ENCODE measurements at regions of chr22 and their contacts with region 1.

Region 1: GRCh38 chr22:45984316-45984916 is 7.5 kb upstream of the WNT7B start:
- DNase-seq: no peak
- ATAC-seq: no peak
- H3K4me3 ChIP-seq: no peak overlapping the region
- H3K27ac ChIP-seq: no peak overlapping the region
- H3K4me1 ChIP-seq: peaks cover 0 to 1% of the 10 kb centered on the region in 2 experiments; a peak in 2 of 5 replicates
- H3K27me3 ChIP-seq: peaks cover 0 to 16% of the 10 kb centered on the region in 2 experiments; a peak in 1 of 5 replicates
- CTCF ChIP-seq: no peak
- EP300 ChIP-seq: no peak
- POLR2A ChIP-seq: no peak
- RAD21 ChIP-seq: no peak

Region 2: GRCh38 chr22:45584121-45584570 is 400.3 kb before region 1 on chr22:
- CTCF ChIA-PET with region 1: no interaction called
- POLR2A ChIA-PET with region 1: no interaction called
- in situ Hi-C with region 1: loop called (anchors 5 kb)
- intact Hi-C with region 1: no loop called
- DNase-seq: no peak
- ATAC-seq: no peak
- H3K4me3 ChIP-seq: no peak overlapping the region
- H3K27ac ChIP-seq: no peak overlapping the region
- H3K4me1 ChIP-seq: peaks cover 0 to 5% of the 10 kb centered on the region in 2 experiments; a peak in 2 of 5 replicates
- H3K27me3 ChIP-seq: peaks cover 9 to 88% of the 10 kb centered on the region in 2 experiments; a peak in 4 of 5 replicates
- CTCF ChIP-seq: no peak
- EP300 ChIP-seq: no peak
- POLR2A ChIP-seq: no peak
- RAD21 ChIP-seq: no peak

Region 3: DNA sequence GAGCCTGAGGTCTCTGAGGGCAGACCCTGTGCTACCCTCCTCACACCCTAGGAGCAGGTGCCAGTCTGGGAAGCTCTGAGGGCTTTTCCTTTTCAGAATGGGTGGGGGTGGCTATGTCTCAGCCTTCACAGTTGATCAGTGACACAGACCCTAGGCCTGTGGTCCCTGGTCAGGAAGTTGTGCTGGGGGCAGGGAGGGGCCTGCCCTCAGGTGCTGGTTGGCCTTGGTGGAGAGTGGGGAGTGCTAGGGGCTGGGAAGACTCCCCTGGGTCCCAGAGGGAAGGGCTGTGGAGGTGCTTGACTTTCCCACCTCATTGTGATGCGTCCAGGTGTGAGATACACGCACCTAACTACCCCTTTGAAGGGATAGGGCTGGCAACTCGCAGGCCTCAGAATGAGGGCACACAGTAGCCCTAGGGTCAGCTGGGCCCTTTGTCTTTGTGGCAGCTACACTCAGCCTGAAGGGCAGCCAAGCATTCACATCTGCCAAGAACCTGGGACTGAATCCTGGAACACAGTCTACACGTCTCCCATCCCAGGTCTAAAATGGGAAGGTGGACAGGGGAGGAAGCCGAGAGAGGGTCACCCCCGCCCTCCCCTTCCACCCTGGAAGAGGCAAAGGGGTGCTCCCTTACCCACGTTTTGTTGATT is 344.0 kb before region 1 on chr22:
- CTCF ChIA-PET with region 1: no interaction called
- POLR2A ChIA-PET with region 1: no interaction called
- in situ Hi-C with region 1: loop called (anchors 5 kb)
- intact Hi-C with region 1: no loop called
- DNase-seq: no peak
- ATAC-seq: no peak
- H3K4me3 ChIP-seq: no peak overlapping the region
- H3K27ac ChIP-seq: no peak overlapping the region
- H3K4me1 ChIP-seq: peaks cover 13 to 23% of the 10 kb centered on the region in 2 experiments
- H3K27me3 ChIP-seq: peaks cover 0 to 27% of the 10 kb centered on the region in 2 experiments; a peak in 2 of 5 replicates
- CTCF ChIP-seq: no peak
- EP300 ChIP-seq: no peak
- POLR2A ChIP-seq: no peak
- RAD21 ChIP-seq: no peak